ENCODE measurements at regions of chr16 and their contacts with region 1.

Region 1: DNA sequence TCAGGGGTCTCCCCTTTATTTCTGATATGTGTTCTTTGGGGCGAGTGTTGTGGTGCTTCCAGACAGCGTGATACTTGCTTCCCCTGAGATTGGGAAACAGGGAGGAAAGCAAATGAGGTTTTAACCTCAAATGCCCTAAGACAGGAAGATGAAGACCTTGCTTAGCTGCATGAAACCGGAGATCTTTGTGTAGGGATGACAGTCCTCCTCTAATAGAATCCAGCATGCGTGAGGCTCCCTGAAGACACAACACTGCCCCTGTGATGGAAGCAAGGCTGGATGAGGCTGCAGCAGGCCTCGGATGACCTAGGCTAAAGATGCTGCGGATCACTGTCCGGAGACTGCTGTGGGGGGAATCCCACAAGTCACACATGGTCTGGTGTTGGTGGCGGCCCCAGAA is 491.0 kb downstream of the CDH13 start:
- DNase-seq: no peak

Region 2: DNA sequence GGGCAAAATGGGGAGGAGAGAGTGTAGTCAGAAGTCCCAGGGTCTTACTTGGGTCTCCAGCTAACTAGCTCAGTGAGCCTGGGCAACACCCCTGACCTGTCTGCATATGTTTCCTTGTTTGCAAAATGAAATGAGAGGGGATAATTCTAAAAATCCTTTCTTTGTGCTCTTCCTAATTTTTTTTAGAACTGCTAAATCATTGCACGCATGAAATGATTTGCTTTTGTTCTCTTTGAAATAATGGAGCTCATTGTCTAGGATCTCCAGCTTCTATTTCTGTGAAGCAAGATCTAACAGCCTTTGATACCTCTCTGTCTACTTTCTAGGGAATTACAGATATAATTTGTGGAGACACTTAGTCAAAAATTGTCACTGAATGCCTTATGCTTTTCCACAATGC is 309.8 kb before region 1 on chr16:
- intact Hi-C with region 1: no loop called
- DNase-seq: no peak

Region 3: DNA sequence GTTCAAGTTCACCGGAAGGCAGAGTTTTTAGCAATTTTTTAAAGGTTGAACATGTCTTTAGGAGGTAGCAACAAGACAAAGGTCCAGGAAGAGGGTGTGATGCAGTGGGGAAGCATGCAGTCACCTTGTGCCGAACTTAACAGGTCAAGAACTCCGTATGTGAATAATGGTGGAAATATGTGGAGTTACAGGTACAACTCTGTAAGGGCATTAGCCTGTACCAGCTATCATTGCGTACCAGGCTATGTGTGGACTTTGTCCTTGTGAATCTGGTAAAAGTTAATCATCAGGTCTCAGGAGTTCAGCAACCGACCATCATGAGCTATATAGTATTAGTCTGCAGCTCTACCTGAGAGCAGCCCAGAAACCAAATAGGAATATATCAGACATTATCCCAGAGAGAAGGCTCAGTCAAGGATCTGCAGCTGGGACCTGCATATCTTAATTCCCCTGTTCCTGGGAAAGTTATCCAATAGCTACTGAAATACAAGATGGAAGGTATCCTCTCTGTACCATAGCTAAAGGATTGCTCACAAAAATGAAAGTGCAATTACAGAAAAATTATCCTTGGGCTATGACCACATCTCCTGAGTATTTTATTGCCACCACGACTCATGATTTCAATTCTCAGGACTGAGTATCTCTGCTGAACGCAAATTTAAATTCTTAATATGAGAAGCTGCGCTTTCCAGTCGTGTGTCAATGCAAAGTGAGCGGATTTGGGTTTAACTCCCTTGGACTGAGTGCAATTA is 21.7 kb before region 1 on chr16:
- intact Hi-C with region 1: loop called in 1 of 2 experiments (anchors 1 kb)
- DNase-seq: no peak

Region 4: GRCh38 chr16:83158320-83158957 is 40.6 kb after region 1 on chr16:
- intact Hi-C with region 1: no loop called
- DNase-seq: no peak